Mammary epithelial cell (primary cell): ENCODE measurements at regions of chr12 and their contacts with region 1.

Region 1: GRCh38 chr12:91883781-91884180 is 261.9 kb downstream of the BTG1 start:
- DNase-seq: no peak
- H3K4me3 ChIP-seq: no peak overlapping the region
- H3K27ac ChIP-seq: no peak overlapping the region
- H3K4me1 ChIP-seq: no peaks in the 10 kb centered on the region
- H3K27me3 ChIP-seq: no peaks in the 10 kb centered on the region
- CTCF ChIP-seq: no peak

Region 2: DNA sequence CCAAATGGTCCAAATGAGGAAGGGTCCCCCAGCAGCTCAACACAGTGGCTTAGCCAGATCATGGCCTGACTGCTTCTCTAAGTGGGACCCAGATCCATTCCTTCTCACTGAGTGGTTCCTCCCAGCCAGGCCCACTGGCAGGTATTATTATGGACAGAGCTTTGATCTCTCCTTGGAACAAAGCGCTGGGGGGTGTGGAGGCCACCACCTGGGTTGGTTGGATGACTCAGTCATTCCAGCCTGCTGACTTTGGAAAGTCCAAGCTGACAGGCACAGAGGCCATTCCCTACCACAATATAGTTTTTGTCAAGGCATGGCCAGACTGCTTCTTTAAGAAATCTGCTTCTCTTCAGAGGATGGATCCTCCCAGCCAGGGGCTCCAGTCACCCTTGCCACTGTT is 79.2 kb before region 1 on chr12:
- CTCF ChIA-PET with region 1: no interaction called
- dilution Hi-C with region 1: no loop called
- in situ Hi-C with region 1: no loop called
- intact Hi-C with region 1: no loop called
- DNase-seq: peak; percentile 93
- H3K4me3 ChIP-seq: no peak overlapping the region
- H3K27ac ChIP-seq: no peak overlapping the region
- H3K4me1 ChIP-seq: peaks cover 9% of the 10 kb centered on the region
- H3K27me3 ChIP-seq: no peaks in the 10 kb centered on the region
- CTCF ChIP-seq: no peak

Region 3: GRCh38 chr12:91871751-91872150 is 12.0 kb before region 1 on chr12:
- CTCF ChIA-PET with region 1: no interaction called
- dilution Hi-C with region 1: no loop called
- in situ Hi-C with region 1: no loop called
- intact Hi-C with region 1: loop called (anchors 2 kb)
- DNase-seq: no peak
- H3K4me3 ChIP-seq: no peak overlapping the region
- H3K27ac ChIP-seq: no peak overlapping the region
- H3K4me1 ChIP-seq: no peaks in the 10 kb centered on the region
- H3K27me3 ChIP-seq: no peaks in the 10 kb centered on the region
- CTCF ChIP-seq: no peak

Region 4: GRCh38 chr12:91935296-91935695 is 51.5 kb after region 1 on chr12:
- CTCF ChIA-PET with region 1: no interaction called
- dilution Hi-C with region 1: no loop called
- in situ Hi-C with region 1: no loop called
- intact Hi-C with region 1: loop called (anchors 5 kb)
- DNase-seq: no peak
- H3K4me3 ChIP-seq: no peak overlapping the region
- H3K27ac ChIP-seq: no peak overlapping the region
- H3K4me1 ChIP-seq: no peaks in the 10 kb centered on the region
- H3K27me3 ChIP-seq: no peaks in the 10 kb centered on the region
- CTCF ChIP-seq: no peak

Region 5: DNA sequence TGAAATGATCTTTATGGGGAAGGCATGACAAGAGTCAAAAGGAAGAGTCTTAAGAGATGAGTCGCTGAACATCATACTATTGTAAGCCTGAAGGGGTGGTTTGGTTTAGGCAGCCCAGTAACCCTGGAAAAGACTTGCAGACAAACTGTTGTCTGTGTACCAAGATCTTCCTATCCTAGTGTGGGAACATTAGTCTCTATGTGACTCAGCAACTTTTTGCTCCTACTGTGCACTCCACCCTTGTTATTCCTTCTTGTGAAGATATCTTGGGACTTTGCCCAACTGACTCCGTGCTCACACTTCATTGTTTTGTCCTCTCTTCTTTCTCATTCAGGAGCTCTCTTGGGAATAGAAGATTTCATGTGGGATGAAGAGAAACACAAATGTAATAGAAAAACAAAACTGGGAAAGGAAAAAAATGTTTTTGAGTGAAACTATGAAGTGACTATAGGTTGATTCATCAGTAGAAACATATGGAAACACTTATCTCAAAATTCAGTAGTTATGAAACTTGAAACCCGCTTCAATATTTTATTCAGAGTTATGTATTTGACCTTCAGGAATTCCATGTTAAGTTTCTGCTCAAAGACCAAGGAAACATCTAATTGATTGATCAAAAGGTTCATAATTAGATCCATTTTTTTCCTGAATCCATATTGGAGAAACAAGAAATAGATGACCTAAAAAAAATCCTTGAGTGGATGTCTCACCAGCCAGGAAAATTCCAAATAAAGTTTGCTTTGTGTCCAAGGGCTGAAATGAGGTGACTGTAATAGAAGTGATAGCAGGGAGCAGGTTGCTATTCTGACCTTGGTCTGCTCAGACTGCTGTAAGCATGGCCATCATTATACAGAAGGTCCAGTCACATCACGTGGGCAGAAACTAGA is 194.6 kb after region 1 on chr12:
- CTCF ChIA-PET with region 1: no interaction called
- dilution Hi-C with region 1: no loop called
- in situ Hi-C with region 1: no loop called
- intact Hi-C with region 1: no loop called
- DNase-seq: peak; percentile 97
- H3K4me3 ChIP-seq: no peak overlapping the region
- H3K27ac ChIP-seq: peak overlapping the region; percentile 91
- H3K4me1 ChIP-seq: peaks cover 40% of the 10 kb centered on the region
- H3K27me3 ChIP-seq: no peaks in the 10 kb centered on the region
- CTCF ChIP-seq: no peak